Breast epithelium (tissue), 4 donors: ENCODE measurements at regions of chr6 and their contacts with region 1.

Region 1: DNA sequence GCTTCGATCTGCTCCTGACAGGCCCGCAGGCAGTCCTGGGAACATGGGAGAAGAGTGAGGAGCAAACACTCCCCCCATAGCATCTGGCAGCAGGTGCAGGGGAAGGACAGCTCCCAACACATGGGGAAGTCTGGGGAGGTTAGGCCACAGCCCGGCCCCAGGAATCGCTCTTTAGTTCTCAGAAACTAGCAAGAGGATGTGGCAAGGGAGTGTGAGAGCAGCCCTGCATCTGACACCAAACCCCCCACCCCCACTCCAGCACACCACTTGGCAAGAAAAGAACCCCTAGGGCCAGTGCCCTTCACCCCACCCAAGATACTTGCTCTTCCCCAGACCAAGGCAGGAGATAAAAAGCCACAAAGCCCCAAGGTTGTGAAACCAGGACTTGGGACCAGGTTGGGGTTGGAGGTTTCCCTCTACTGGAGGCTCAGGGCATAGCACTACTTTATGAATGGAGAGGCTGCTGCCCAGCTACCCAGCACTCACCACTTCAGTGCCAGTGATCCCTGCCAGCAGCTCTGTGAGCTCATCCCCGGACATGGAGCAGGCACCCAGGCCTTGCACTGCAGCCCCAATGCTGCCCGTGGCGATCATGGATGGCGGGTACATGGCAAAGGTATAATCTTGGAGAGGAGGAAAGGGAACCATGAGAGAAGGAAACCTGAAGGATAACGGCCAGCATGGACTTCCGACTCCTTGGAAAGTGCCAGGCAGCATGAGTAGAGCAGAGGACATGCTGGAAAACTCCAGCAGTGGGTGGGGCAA is 5.4 kb downstream of the CCND3 start:
- DNase-seq: peak; percentile 60 to 65
- H3K4me3 ChIP-seq: no peak overlapping the region
- H3K27ac ChIP-seq: peak overlapping the region; percentile 22 to 45
- H3K4me1 ChIP-seq: peaks cover 19 to 20% of the 10 kb centered on the region in 2 donors
- H3K27me3 ChIP-seq: no peaks in the 10 kb centered on the region
- CTCF ChIP-seq: peak; percentile 54 to 83 (median 73)
- POLR2A ChIP-seq: no peak

Region 2: DNA sequence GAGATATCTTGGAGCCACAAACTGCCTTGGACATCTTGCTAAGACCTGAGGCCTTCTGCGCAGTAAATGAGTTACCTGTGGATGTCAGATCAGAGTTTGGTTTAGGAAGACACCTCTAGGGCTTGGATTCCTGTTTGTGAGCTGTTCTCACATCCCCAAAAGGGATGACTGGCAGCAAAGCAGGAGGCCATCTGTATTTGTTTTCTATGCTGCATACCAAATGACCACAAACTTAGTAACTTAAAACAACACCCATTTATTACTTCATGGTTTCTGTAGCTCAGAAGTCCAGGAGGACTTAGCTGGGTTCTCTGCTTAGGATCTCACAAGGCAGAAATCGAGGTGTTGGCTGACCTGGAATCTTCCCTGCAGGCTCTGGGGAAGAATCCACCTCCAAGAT is 1014.0 kb before region 1 on chr6:
- intact Hi-C with region 1: no loop called
- DNase-seq: no peak
- H3K4me3 ChIP-seq: no peak overlapping the region
- H3K27ac ChIP-seq: no peak overlapping the region
- H3K4me1 ChIP-seq: no peaks in the 10 kb centered on the region
- H3K27me3 ChIP-seq: peaks cover 0 to under 1% of the 10 kb centered on the region in 2 donors
- CTCF ChIP-seq: no peak
- POLR2A ChIP-seq: no peak

Region 3: GRCh38 chr6:41787219-41787917 is 148.9 kb before region 1 on chr6 and contains the start of gene TOMM6:
- intact Hi-C with region 1: loop called (anchors 10 kb)
- DNase-seq: peak; percentile 92 to 96
- H3K4me3 ChIP-seq: peak within 1 kb of the TSS; percentile 73 to 89 (median 78)
- H3K27ac ChIP-seq: peak within 1 kb of the TSS; percentile 93 to 95
- H3K4me1 ChIP-seq: peaks cover 0 to 17% of the 10 kb centered on the region in 2 donors
- H3K27me3 ChIP-seq: no peaks in the 10 kb centered on the region
- CTCF ChIP-seq: peak; percentile 97 to 99 (median 98)
- POLR2A ChIP-seq: peak; percentile 63
- total RNA-seq, gene TOMM6: 108 to 127 (median 117) TPM

Region 4: GRCh38 chr6:42104095-42104806 is 168.0 kb after region 1 on chr6:
- intact Hi-C with region 1: no loop called
- DNase-seq: no peak
- H3K4me3 ChIP-seq: peak overlapping the region; percentile 38 to 69 (median 39)
- H3K27ac ChIP-seq: peak overlapping the region in 1 of 2 donors; percentile 49
- H3K4me1 ChIP-seq: peaks cover 0 to 6% of the 10 kb centered on the region in 2 donors
- H3K27me3 ChIP-seq: no peaks in the 10 kb centered on the region
- CTCF ChIP-seq: peak in 2 of 3 donors; percentile 35 to 42
- POLR2A ChIP-seq: no peak

Region 5: DNA sequence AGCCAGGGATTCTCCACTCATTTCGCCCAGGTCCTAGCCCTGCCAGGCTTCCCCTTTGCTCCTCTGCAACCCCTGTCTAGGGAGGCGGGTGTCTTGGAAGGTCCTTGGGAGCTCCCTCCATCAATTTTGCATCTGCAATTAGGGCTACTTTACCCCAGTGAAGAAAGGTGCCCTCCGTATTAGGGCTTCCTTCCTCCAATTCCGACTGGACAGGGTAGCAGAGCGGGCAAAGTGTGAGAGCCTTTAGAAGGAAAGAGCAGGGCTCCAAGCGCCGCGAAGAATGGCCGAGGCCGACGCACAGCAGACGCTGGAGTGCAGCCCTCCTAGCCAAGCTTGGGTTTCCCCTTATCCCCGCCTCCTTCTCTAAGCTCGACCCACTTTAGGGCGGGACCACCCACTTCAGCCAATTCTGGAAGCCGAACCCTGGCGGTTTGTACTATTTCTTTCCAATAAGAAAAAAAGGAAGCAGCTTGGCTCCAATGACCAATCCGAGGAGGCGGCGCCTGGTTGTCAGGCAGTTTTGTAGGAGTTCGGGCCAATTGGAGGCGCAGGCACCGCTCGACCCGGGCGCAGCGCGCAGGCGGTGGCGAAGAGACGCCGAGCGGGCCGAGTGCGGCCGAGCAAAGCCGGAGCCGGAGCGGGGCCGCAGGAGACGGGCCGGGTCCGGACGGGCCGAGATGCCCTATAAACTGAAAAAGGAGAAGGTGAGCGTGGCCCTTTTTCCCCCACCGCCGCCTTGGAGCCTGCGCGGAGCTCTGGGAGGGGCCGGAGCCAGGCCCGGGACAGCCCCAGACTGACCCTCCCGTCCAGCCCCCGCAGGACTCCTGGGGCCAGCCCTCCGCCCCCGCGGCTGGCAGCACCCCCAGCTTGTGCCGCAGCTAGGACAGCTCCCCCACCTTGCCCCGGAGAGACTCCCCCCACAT is 1048.0 kb after region 1 on chr6 and contains the start of gene PPP2R5D:
- intact Hi-C with region 1: loop called (anchors 10 kb)
- DNase-seq: peak; percentile 98
- H3K4me3 ChIP-seq: peak within 1 kb of the TSS; percentile 88 to 92 (median 90)
- H3K27ac ChIP-seq: peak within 1 kb of the TSS; percentile 85 to 92
- H3K4me1 ChIP-seq: peaks cover 7% of the 10 kb centered on the region in 2 donors
- H3K27me3 ChIP-seq: no peaks in the 10 kb centered on the region
- CTCF ChIP-seq: peak in 2 of 3 donors; percentile 26 to 32
- POLR2A ChIP-seq: peak; percentile 55
- total RNA-seq, gene PPP2R5D: 25.2 to 35.6 (median 34.7) TPM